Tibial artery (tissue), 4 donors: ENCODE measurements at regions of chr4 and their contacts with region 1.

Region 1: DNA sequence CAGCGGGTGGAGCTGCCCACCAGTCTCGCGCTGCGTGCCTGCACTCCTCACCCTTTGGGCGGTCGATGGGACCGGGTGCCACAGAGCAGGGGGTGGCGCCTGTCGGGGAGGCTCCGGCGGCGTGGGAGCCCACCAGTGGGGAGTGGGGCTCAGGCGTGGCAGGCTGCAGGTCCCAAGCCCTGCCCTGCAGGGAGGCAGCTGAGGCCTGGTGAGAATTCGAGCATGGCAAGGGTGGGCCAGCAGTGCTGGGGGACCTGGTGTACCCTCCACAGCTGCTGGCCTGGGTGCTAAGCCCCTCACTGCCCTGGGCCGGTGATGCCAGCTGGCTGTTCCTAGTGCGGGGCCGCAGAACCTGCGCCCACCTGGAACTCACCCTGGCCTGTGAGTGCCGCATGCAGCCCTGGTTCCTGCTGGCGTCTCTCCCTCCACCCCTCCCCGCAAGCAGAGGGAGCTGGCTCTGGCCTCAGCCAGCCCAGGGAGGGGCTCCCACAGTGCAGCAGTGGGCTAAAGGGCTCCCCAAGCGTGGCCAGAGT is 746.6 kb upstream of the PABPC4L start:
- DNase-seq: no peak
- H3K4me3 ChIP-seq: no peak overlapping the region
- H3K27ac ChIP-seq: no peak overlapping the region
- H3K4me1 ChIP-seq: no peaks in the 10 kb centered on the region
- H3K27me3 ChIP-seq: no peaks in the 10 kb centered on the region
- CTCF ChIP-seq: no peak

Region 2: GRCh38 chr4:133903029-133903428 is 1045.1 kb before region 1 on chr4:
- intact Hi-C with region 1: loop called (anchors 10 kb)
- DNase-seq: no peak
- H3K4me3 ChIP-seq: no peak overlapping the region
- H3K27ac ChIP-seq: no peak overlapping the region
- H3K4me1 ChIP-seq: no peaks in the 10 kb centered on the region
- H3K27me3 ChIP-seq: no peaks in the 10 kb centered on the region
- CTCF ChIP-seq: no peak